B cell (primary cell): ENCODE measurements at regions of chrX and their contacts with region 1.

Region 1: GRCh38 chrX:52261463-52262194 is 76.9 kb downstream of the MAGED4 start:
- DNase-seq: peak; percentile 89
- ATAC-seq: peak; percentile 90
- H3K4me3 ChIP-seq: peak overlapping the region; percentile 45 to 82 (median 81)
- H3K4me3 Mint-ChIP-seq: peak overlapping the region; percentile 98
- H3K27ac ChIP-seq: peak overlapping the region; percentile 80 to 93
- H3K27ac Mint-ChIP-seq: peak overlapping the region; percentile 100
- H3K4me1 ChIP-seq: peaks cover 11 to 14% of the 10 kb centered on the region in 2 donors
- H3K4me1 Mint-ChIP-seq: peaks cover 18% of the 10 kb centered on the region
- H3K27me3 ChIP-seq: peaks cover 0 to 13% (median 0%) of the 10 kb centered on the region in 4 experiments
- H3K27me3 Mint-ChIP-seq: peaks cover 8% of the 10 kb centered on the region
- CTCF ChIP-seq: peak; percentile 81

Region 2: GRCh38 chrX:51144852-51145442 is 1116.7 kb before region 1 on chrX:
- CTCF ChIA-PET with region 1: no interaction called
- POLR2A ChIA-PET with region 1: no interaction called
- intact Hi-C with region 1: loop called (anchors 10 kb)
- DNase-seq: peak; percentile 39
- ATAC-seq: no peak
- H3K4me3 ChIP-seq: no peak overlapping the region
- H3K4me3 Mint-ChIP-seq: no peak overlapping the region
- H3K27ac ChIP-seq: no peak overlapping the region
- H3K27ac Mint-ChIP-seq: no peak overlapping the region
- H3K4me1 ChIP-seq: no peaks in the 10 kb centered on the region
- H3K4me1 Mint-ChIP-seq: no peaks in the 10 kb centered on the region
- H3K27me3 ChIP-seq: no peaks in the 10 kb centered on the region
- H3K27me3 Mint-ChIP-seq: peaks cover 3% of the 10 kb centered on the region
- CTCF ChIP-seq: peak; percentile 65

Region 3: DNA sequence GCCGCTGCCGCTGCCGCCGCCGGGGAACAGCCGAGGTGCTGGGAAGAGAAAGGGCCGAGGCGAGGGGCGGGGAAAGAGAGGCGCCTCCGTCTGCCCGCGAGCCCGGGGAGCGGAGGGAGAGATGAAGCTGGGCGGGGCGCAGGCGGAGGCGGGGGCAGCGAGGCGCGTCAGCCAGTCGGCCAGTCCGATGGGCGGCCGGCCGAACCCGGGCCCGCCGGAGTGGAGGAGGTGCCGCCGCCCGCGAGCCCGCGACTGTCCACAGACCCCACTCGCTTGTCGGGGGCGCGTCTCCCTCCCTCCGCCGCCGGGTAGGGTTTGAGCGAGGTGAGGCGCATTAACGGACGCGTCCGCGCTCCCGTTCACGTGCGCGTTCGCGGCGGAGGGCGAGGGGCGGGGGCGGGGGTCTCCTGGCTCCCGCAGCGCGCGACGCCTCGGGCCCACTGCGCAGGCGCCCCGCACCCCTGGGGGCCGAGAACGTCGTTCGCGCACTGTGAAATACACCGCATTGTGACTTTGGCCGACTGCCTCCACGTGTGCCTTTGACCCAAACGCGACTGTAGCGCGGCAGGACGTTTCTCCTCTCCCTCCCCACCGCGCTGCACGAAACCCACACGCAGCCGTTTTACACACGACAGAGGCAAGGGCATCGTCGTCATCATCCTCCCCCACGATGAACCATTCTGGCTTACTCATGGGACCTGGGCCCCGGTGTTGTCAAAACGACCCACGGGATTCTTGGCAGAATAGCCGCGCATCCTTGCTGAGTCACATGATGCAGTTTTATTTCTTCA is 764.9 kb before region 1 on chrX and contains the start of gene NUDT11:
- CTCF ChIA-PET with region 1: no interaction called
- POLR2A ChIA-PET with region 1: no interaction called
- intact Hi-C with region 1: loop called (anchors 5 kb)
- DNase-seq: peak; percentile 30
- ATAC-seq: peak; percentile 56
- H3K4me3 ChIP-seq: peak within 1 kb of the TSS in 4 of 5 experiments; percentile 29 to 51 (median 45)
- H3K4me3 Mint-ChIP-seq: peak within 1 kb of the TSS; percentile 90
- H3K27ac ChIP-seq: no peak within 1 kb of the TSS
- H3K27ac Mint-ChIP-seq: peak within 1 kb of the TSS; percentile 46
- H3K4me1 ChIP-seq: peaks cover 0 to 6% of the 10 kb centered on the region in 2 donors
- H3K4me1 Mint-ChIP-seq: peaks cover 10% of the 10 kb centered on the region
- H3K27me3 ChIP-seq: peaks cover 0 to 16% (median 5%) of the 10 kb centered on the region in 4 experiments
- H3K27me3 Mint-ChIP-seq: peaks cover 26% of the 10 kb centered on the region
- CTCF ChIP-seq: no peak
- total RNA-seq, gene NUDT11: 0.24 TPM in 1 of 2 replicates, not detected in the other

Region 4: GRCh38 chrX:51614353-51615012 is 647.1 kb before region 1 on chrX:
- CTCF ChIA-PET with region 1: interaction called, 3 read pairs
- POLR2A ChIA-PET with region 1: no interaction called
- intact Hi-C with region 1: loop called (anchors 1 kb)
- DNase-seq: peak; percentile 30
- ATAC-seq: peak; percentile 36
- H3K4me3 ChIP-seq: no peak overlapping the region
- H3K4me3 Mint-ChIP-seq: no peak overlapping the region
- H3K27ac ChIP-seq: no peak overlapping the region
- H3K27ac Mint-ChIP-seq: no peak overlapping the region
- H3K4me1 ChIP-seq: no peaks in the 10 kb centered on the region
- H3K4me1 Mint-ChIP-seq: peaks cover 3% of the 10 kb centered on the region
- H3K27me3 ChIP-seq: peaks cover 0 to 17% (median 0%) of the 10 kb centered on the region in 4 experiments
- H3K27me3 Mint-ChIP-seq: peaks cover 35% of the 10 kb centered on the region
- CTCF ChIP-seq: peak; percentile 59

Region 5: DNA sequence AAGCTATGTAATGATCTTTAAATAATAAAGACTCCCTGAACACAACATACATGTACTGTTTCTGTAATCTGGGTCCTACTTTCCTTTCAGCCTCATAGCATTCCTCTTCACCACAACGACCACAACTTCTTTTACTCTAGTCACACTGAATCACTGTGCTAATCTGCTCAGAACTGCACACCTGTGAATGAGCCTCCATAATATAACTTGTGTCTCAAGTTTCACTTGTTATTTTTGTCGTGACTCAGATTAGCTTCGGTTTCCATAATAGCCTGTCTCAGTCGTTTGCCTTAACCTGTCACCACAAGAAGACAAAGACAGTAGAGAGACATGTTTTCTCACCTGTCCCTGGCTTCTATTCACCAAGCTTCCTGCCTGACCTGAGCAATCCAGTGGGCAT is 306.4 kb before region 1 on chrX:
- CTCF ChIA-PET with region 1: no interaction called
- POLR2A ChIA-PET with region 1: no interaction called
- intact Hi-C with region 1: no loop called
- DNase-seq: no peak
- ATAC-seq: no peak
- H3K4me3 ChIP-seq: no peak overlapping the region
- H3K4me3 Mint-ChIP-seq: no peak overlapping the region
- H3K27ac ChIP-seq: no peak overlapping the region
- H3K27ac Mint-ChIP-seq: no peak overlapping the region
- H3K4me1 ChIP-seq: no peaks in the 10 kb centered on the region
- H3K4me1 Mint-ChIP-seq: peaks cover 3% of the 10 kb centered on the region
- H3K27me3 ChIP-seq: no peaks in the 10 kb centered on the region
- H3K27me3 Mint-ChIP-seq: peaks cover 9% of the 10 kb centered on the region
- CTCF ChIP-seq: no peak

Region 6: GRCh38 chrX:52217494-52218160 is 44.0 kb before region 1 on chrX:
- CTCF ChIA-PET with region 1: no interaction called
- POLR2A ChIA-PET with region 1: interaction called, 12 read pairs
- intact Hi-C with region 1: no loop called
- DNase-seq: no peak
- ATAC-seq: no peak
- H3K4me3 ChIP-seq: no peak overlapping the region
- H3K4me3 Mint-ChIP-seq: no peak overlapping the region
- H3K27ac ChIP-seq: no peak overlapping the region
- H3K27ac Mint-ChIP-seq: no peak overlapping the region
- H3K4me1 ChIP-seq: no peaks in the 10 kb centered on the region
- H3K4me1 Mint-ChIP-seq: no peaks in the 10 kb centered on the region
- H3K27me3 ChIP-seq: no peaks in the 10 kb centered on the region
- H3K27me3 Mint-ChIP-seq: peaks cover 18% of the 10 kb centered on the region
- CTCF ChIP-seq: no peak